MCF 10A (cell line): ENCODE measurements at regions of chr1 and their contacts with region 1.

Region 1: DNA sequence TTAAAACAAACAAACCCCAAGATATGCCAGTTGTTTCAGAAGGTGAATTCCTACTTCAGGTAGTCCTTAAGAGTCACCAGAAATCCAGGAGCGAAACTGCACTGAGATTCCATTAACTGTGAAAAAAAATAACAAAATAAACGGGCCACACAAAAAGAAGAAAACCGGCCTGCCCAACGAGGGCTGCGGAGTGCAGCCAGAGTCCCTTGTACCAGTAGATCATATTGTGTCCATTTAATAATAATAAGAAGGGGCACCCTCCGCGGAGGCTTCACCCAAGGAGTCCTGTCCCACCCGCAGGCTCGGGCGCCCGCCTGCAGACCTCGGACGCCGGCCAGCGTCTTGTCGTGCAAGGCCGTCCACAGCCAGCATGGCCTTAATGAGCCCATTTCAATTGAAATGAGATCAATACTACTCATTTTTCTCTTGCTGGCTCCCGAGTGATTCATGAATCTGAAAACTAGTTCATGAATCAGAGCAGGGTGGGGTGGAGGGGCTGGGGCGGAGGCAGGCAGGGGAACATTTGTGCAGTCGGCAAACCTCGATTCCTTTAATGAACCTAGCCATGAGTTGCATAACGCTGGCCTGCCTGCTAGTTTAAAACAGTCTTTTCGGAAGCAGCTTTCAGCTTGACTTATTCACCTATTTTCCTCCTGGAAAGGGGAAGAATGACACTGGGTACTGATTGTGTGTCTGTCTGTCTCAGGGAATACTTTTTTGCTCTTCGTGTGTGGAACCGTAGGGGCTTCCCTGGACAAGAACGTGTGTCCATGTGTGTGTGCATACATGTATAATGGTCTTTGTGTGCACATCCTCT is 113.1 kb upstream of the IRF2BP2 start:
- DNase-seq: peak; percentile 99
- H3K4me3 Mint-ChIP-seq: peak overlapping the region; percentile 61
- H3K27ac Mint-ChIP-seq: peak overlapping the region; percentile 96
- H3K4me1 Mint-ChIP-seq: peaks cover 77% of the 10 kb centered on the region
- H3K27me3 Mint-ChIP-seq: no peaks in the 10 kb centered on the region
- CTCF ChIP-seq: no peak

Region 2: DNA sequence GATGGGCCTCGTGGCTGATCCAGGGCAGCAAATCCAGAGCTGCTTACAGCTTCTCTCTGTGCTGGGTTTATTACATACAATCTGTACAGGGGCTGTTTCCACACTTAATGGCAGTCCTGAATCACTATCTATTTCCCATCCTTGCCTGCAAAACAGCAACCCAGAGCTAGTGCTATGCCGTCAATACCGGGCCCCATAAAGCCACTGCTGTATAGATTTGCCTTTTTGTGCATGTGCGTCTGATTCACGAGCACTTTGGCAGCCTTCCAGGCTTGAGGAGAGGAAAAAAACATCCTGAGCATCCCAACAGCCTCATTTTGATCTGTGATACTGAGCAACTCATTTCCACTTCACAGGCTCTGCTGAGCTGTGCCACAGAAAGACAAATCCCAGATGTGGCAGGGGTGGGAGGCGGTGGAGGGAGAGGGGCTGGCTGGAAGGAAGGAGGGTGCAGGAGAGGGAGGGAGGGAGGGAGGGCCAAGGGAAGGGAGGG is 179.0 kb before region 1 on chr1:
- CTCF ChIA-PET with region 1: no interaction called
- POLR2A ChIA-PET with region 1: interaction called, 17 read pairs
- intact Hi-C with region 1: no loop called
- DNase-seq: peak; percentile 96
- H3K4me3 Mint-ChIP-seq: no peak overlapping the region
- H3K27ac Mint-ChIP-seq: peak overlapping the region; percentile 80
- H3K4me1 Mint-ChIP-seq: peaks cover 36% of the 10 kb centered on the region
- H3K27me3 Mint-ChIP-seq: no peaks in the 10 kb centered on the region
- CTCF ChIP-seq: no peak

Region 3: DNA sequence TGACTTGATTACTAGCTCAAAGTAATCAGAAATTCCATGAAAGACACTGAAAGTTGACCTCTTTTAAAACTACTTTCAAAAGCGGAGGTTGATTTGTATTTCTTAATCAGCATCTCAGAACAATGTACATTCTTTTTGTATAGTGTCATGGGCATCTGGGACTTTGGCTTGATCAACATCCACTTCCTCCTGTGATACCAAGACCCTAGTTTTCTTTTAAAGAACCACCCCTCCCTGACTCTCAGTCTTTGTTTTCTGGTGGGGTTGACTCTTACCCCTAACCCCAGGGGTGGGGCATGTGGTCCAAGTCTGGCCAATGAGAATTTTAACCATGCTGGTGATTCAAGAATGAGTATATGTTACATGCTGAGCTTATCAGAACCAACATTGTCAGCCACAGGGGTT is 91.4 kb before region 1 on chr1:
- CTCF ChIA-PET with region 1: interaction called, 5 read pairs
- POLR2A ChIA-PET with region 1: interaction called, 42 read pairs
- intact Hi-C with region 1: no loop called
- DNase-seq: peak; percentile 75
- H3K4me3 Mint-ChIP-seq: no peak overlapping the region
- H3K27ac Mint-ChIP-seq: peak overlapping the region; percentile 78
- H3K4me1 Mint-ChIP-seq: peaks cover 27% of the 10 kb centered on the region
- H3K27me3 Mint-ChIP-seq: no peaks in the 10 kb centered on the region
- CTCF ChIP-seq: no peak

Region 4: GRCh38 chr1:234709473-234710228 is 13.5 kb before region 1 on chr1:
- CTCF ChIA-PET with region 1: interaction called, 5 read pairs
- POLR2A ChIA-PET with region 1: interaction called, 44 read pairs
- intact Hi-C with region 1: no loop called
- DNase-seq: no peak
- H3K4me3 Mint-ChIP-seq: no peak overlapping the region
- H3K27ac Mint-ChIP-seq: peak overlapping the region; percentile 7
- H3K4me1 Mint-ChIP-seq: peaks cover 17% of the 10 kb centered on the region
- H3K27me3 Mint-ChIP-seq: no peaks in the 10 kb centered on the region
- CTCF ChIP-seq: no peak

Region 5: GRCh38 chr1:234862944-234863515 is 139.9 kb after region 1 on chr1:
- CTCF ChIA-PET with region 1: no interaction called
- POLR2A ChIA-PET with region 1: interaction called, 6 read pairs
- intact Hi-C with region 1: loop called (anchors 1 kb)
- DNase-seq: peak; percentile 40
- H3K4me3 Mint-ChIP-seq: no peak overlapping the region
- H3K27ac Mint-ChIP-seq: no peak overlapping the region
- H3K4me1 Mint-ChIP-seq: peaks cover 42% of the 10 kb centered on the region
- H3K27me3 Mint-ChIP-seq: no peaks in the 10 kb centered on the region
- CTCF ChIP-seq: no peak

Region 6: DNA sequence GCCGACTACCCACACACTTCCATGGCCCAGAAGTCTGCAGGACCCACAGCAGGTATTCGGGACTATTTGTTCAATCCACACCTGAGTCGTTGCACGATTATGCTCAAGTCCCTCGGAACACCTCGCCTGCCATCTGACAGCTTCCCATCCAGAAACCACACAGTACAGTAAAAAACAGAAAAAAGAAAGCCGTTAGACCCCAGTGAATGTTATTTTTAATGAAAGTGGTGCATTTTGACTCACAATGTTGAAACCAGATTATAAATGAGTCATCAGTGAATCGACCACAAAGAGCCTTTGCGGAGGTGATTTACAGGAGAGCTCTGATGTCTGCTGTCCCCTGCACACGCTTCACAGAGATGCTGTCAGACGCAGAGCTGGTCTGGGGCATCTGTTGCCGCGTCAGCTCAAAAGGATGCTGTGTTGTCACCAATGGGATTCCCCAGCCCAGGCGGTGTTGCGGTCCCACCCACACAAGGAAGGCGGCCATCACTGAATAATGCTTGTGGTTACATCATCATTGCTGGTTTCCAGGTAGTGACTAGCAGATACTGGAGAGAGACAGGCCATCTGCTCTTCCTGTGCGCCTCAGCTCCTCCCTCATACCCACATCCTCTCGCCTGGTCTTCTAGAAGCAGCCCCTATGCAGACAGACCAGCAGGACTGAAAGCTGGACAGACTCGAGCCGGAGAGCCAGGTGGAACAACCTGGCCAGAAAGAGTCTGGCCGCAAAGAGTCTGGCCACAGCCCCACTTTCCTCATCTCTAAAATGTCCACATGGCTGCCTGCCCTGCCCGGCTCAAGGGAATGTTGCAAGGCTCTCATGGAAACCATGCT is 288.7 kb after region 1 on chr1:
- CTCF ChIA-PET with region 1: no interaction called
- POLR2A ChIA-PET with region 1: interaction called, 9 read pairs
- intact Hi-C with region 1: loop called (anchors 1 kb)
- DNase-seq: peak; percentile 99
- H3K4me3 Mint-ChIP-seq: peak overlapping the region; percentile 47
- H3K27ac Mint-ChIP-seq: peak overlapping the region; percentile 92
- H3K4me1 Mint-ChIP-seq: peaks cover 14% of the 10 kb centered on the region
- H3K27me3 Mint-ChIP-seq: no peaks in the 10 kb centered on the region
- CTCF ChIP-seq: no peak

Region 7: DNA sequence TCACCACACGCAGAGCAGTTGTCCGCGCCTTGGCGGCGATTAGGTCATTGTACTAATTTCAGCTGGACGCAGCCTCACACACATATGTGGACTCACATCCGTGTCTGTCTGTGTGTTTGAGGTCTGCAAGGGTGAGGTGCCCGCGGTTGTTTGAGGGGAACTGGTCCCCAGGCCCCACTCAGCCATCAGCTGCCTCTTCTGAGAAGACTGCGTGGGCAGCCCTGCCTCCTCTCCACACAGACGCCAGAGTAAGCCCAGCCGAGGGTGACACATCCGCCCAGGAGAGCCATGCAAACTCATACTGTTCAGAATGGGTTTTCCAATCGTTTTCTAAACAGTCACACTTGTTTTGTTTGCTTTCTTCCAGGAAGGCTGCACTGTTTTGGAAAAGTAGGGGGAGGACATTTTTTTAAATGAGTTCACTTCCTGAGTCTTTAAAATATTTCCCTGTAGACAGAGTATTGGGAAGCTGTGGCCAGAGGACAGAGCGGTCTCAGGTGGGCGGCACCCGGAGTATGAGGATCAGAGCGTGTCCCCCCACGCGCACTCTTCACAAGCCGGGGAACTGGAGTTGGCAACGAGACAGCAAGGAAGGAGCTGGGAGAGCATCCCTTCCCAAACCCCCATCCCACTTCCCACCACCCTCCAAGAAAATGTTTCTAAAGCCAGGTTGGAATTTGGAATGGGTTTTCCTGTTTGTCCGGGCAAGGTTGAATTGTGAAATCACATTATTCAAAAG is 352.2 kb after region 1 on chr1:
- CTCF ChIA-PET with region 1: interaction called, 5 read pairs
- POLR2A ChIA-PET with region 1: interaction called, 156 read pairs
- intact Hi-C with region 1: no loop called
- DNase-seq: peak; percentile 92
- H3K4me3 Mint-ChIP-seq: no peak overlapping the region
- H3K27ac Mint-ChIP-seq: peak overlapping the region; percentile 52
- H3K4me1 Mint-ChIP-seq: peaks cover 30% of the 10 kb centered on the region
- H3K27me3 Mint-ChIP-seq: no peaks in the 10 kb centered on the region
- CTCF ChIP-seq: no peak